Caco-2 (cell line): ENCODE measurements at regions of chrX and their contacts with region 1.

Region 1: DNA sequence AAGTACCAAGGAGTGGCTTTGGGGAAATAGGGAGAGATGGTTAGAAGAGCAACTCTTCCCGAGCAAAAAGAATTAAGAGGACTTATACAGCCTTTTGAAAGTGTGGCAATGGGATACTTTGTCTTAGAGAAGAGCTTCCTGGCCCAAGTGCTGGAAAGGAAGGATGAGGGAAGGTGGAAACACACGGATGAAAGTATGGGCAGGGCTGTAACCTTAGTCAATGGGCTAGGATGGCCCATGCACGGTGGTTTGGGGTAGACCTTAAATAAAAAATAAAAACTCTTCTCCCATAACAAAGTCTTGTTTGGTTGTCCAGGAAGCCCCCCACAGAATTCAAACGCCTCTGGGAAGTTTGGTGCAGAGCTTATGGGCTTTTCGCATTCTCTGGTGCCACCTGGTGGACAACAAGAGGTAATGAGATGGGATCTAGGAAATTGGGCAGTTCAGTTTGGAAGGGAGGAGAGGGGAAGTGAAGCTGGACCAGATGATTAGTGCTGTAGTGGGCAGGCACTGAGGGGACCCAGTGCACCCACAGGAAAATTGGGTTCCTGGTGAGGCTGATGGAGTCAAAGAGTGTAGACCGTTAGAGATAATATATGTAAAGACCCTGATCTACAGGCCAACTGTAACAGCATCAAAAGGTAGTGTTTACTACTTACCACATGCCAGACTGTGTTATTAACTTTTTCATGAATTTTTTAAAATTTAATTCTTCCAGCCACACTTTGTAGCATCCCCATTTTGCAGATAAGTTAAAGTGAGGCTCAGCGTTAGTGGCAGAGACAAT is 13.8 kb upstream of the ENOX2 start:
- DNase-seq: peak; percentile 27 to 32
- H3K4me3 ChIP-seq: no peak overlapping the region
- H3K4me3 Mint-ChIP-seq: no peak overlapping the region
- H3K27ac Mint-ChIP-seq: no peak overlapping the region
- H3K4me1 ChIP-seq: no peaks in the 10 kb centered on the region
- H3K4me1 Mint-ChIP-seq: no peaks in the 10 kb centered on the region
- H3K27me3 ChIP-seq: no peaks in the 10 kb centered on the region
- H3K27me3 Mint-ChIP-seq: no peaks in the 10 kb centered on the region
- CTCF ChIP-seq: peak; percentile 56 to 60

Region 2: GRCh38 chrX:130330706-130331105 is 586.1 kb before region 1 on chrX:
- CTCF ChIA-PET with region 1: interaction called, 3 read pairs
- POLR2A ChIA-PET with region 1: no interaction called
- intact Hi-C with region 1: loop called (anchors 2 kb)
- DNase-seq: peak; percentile 65 to 78
- H3K4me3 ChIP-seq: no peak overlapping the region
- H3K4me3 Mint-ChIP-seq: no peak overlapping the region
- H3K27ac Mint-ChIP-seq: no peak overlapping the region
- H3K4me1 ChIP-seq: no peaks in the 10 kb centered on the region
- H3K4me1 Mint-ChIP-seq: no peaks in the 10 kb centered on the region
- H3K27me3 ChIP-seq: no peaks in the 10 kb centered on the region
- H3K27me3 Mint-ChIP-seq: peaks cover 2% of the 10 kb centered on the region
- CTCF ChIP-seq: peak in 1 of 2 experiments; percentile 59

Region 3: GRCh38 chrX:130393451-130394074 is 523.3 kb before region 1 on chrX:
- CTCF ChIA-PET with region 1: interaction called, 3 read pairs
- POLR2A ChIA-PET with region 1: no interaction called
- intact Hi-C with region 1: loop called (anchors 1 kb)
- DNase-seq: peak; percentile 33 to 35
- H3K4me3 ChIP-seq: no peak overlapping the region
- H3K4me3 Mint-ChIP-seq: no peak overlapping the region
- H3K27ac Mint-ChIP-seq: no peak overlapping the region
- H3K4me1 ChIP-seq: no peaks in the 10 kb centered on the region
- H3K4me1 Mint-ChIP-seq: no peaks in the 10 kb centered on the region
- H3K27me3 ChIP-seq: no peaks in the 10 kb centered on the region
- H3K27me3 Mint-ChIP-seq: no peaks in the 10 kb centered on the region
- CTCF ChIP-seq: peak; percentile 34 to 70

Region 4: GRCh38 chrX:130539721-130540321 is 377.0 kb before region 1 on chrX:
- CTCF ChIA-PET with region 1: interaction called, 6 read pairs
- POLR2A ChIA-PET with region 1: no interaction called
- intact Hi-C with region 1: loop called (anchors 1 kb)
- DNase-seq: peak in 1 of 2 experiments; percentile 32
- H3K4me3 ChIP-seq: no peak overlapping the region
- H3K4me3 Mint-ChIP-seq: no peak overlapping the region
- H3K27ac Mint-ChIP-seq: no peak overlapping the region
- H3K4me1 ChIP-seq: no peaks in the 10 kb centered on the region
- H3K4me1 Mint-ChIP-seq: no peaks in the 10 kb centered on the region
- H3K27me3 ChIP-seq: no peaks in the 10 kb centered on the region
- H3K27me3 Mint-ChIP-seq: peaks cover 10% of the 10 kb centered on the region
- CTCF ChIP-seq: peak; percentile 57 to 72

Region 5: DNA sequence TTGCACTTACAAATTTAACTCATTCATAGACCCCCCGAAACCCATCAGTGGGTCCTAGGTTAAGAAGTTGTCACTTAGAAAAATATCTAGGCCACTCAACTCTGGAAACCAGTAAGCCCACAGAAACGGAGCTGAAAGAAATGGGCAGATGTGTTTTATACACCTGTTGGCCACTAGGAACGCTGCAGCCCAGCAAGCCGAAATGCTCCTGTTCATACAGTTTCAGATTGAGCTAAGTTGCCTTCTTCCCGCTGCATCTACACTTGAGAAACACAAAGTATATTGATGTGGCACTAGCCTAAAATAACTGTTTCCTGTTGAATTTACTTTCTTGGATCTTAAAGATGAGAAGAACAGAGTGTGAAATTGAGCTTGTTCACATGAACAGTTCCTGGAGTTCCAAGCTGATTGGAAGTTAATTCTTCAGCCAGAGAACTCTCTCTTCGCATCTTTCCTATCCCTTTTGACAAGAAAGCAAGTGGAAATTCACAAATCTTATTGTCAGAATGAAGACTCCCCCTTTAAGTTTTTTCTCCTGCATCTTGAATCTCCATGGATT is 340.9 kb before region 1 on chrX:
- CTCF ChIA-PET with region 1: interaction called, 16 read pairs
- POLR2A ChIA-PET with region 1: no interaction called
- intact Hi-C with region 1: loop called (anchors 5 kb)
- DNase-seq: peak in 1 of 2 experiments; percentile 10
- H3K4me3 ChIP-seq: no peak overlapping the region
- H3K4me3 Mint-ChIP-seq: no peak overlapping the region
- H3K27ac Mint-ChIP-seq: no peak overlapping the region
- H3K4me1 ChIP-seq: no peaks in the 10 kb centered on the region
- H3K4me1 Mint-ChIP-seq: no peaks in the 10 kb centered on the region
- H3K27me3 ChIP-seq: no peaks in the 10 kb centered on the region
- H3K27me3 Mint-ChIP-seq: no peaks in the 10 kb centered on the region
- CTCF ChIP-seq: peak; percentile 49 to 50

Region 6: GRCh38 chrX:131041667-131042066 is 124.8 kb after region 1 on chrX:
- CTCF ChIA-PET with region 1: no interaction called
- POLR2A ChIA-PET with region 1: no interaction called
- intact Hi-C with region 1: no loop called
- DNase-seq: no peak
- H3K4me3 ChIP-seq: no peak overlapping the region
- H3K4me3 Mint-ChIP-seq: no peak overlapping the region
- H3K27ac Mint-ChIP-seq: no peak overlapping the region
- H3K4me1 ChIP-seq: no peaks in the 10 kb centered on the region
- H3K4me1 Mint-ChIP-seq: no peaks in the 10 kb centered on the region
- H3K27me3 ChIP-seq: no peaks in the 10 kb centered on the region
- H3K27me3 Mint-ChIP-seq: peaks cover 18% of the 10 kb centered on the region
- CTCF ChIP-seq: no peak